ENCODE measurements at regions of chr1 and their contacts with region 1.

Region 1: GRCh38 chr1:95095833-95096217 is 21.3 kb upstream of the TLCD4 start:
- DNase-seq: peak; percentile 54
- ATAC-seq: peak; percentile 47
- H3K4me3 ChIP-seq: peak overlapping the region; percentile 24
- H3K27ac ChIP-seq: peak overlapping the region; percentile 76
- H3K4me1 ChIP-seq: peaks cover 28% of the 10 kb centered on the region
- H3K27me3 ChIP-seq: no peaks in the 10 kb centered on the region
- CTCF ChIP-seq: no peak

Region 2: GRCh38 chr1:95072532-95073419 is 23.0 kb before region 1 on chr1 and contains the start of gene ALG14:
- CTCF ChIA-PET with region 1: no interaction called
- POLR2A ChIA-PET with region 1: no interaction called
- intact Hi-C with region 1: loop called (anchors 1 kb)
- DNase-seq: peak; percentile 94
- ATAC-seq: peak; percentile 99
- H3K4me3 ChIP-seq: peak within 1 kb of the TSS; percentile 91
- H3K27ac ChIP-seq: peak within 1 kb of the TSS; percentile 78
- H3K4me1 ChIP-seq: peaks cover 16% of the 10 kb centered on the region
- H3K27me3 ChIP-seq: no peaks in the 10 kb centered on the region
- CTCF ChIP-seq: no peak
- total RNA-seq, gene ALG14: 3.4 and 9.7 TPM in 2 replicates

Region 3: GRCh38 chr1:95084317-95085176 is 11.3 kb before region 1 on chr1:
- CTCF ChIA-PET with region 1: interaction called, 10 read pairs
- POLR2A ChIA-PET with region 1: interaction called, 5 read pairs
- intact Hi-C with region 1: loop called (anchors 1 kb)
- DNase-seq: peak; percentile 77
- ATAC-seq: peak; percentile 92
- H3K4me3 ChIP-seq: no peak overlapping the region
- H3K27ac ChIP-seq: peak overlapping the region; percentile 71
- H3K4me1 ChIP-seq: peaks cover 34% of the 10 kb centered on the region
- H3K27me3 ChIP-seq: no peaks in the 10 kb centered on the region
- CTCF ChIP-seq: peak; percentile 88

Measured in PC-3 (cell line).